ENCODE measurements at regions of chr5 and their contacts with region 1.

Region 1: GRCh38 chr5:71533614-71534013 is 53.5 kb upstream of the MCCC2 start:
- DNase-seq: peak; percentile 19
- H3K4me3 ChIP-seq: no peak overlapping the region
- H3K27ac ChIP-seq: no peak overlapping the region
- H3K4me1 ChIP-seq: no peaks in the 10 kb centered on the region
- H3K27me3 ChIP-seq: no peaks in the 10 kb centered on the region
- CTCF ChIP-seq: no peak

Region 2: DNA sequence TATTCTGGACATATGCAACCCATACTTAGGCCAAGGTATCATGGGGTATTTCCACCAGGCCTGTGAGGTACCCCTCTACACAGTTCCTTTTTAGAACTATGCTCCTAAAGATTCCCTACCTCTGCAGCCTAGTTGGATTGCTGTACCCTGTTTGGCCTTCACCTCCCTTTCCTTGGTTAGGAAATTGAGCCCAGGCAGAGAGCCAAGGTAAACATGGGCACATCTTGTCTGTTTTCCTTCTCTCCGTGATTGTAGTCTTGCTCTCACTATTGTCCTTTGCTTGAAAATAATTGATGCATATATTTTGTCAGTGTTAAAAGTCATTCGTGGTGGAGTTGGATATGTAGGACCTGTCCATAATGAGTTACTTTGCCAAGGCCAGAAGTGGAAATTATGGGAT is 51.5 kb before region 1 on chr5:
- CTCF ChIA-PET with region 1: no interaction called
- POLR2A ChIA-PET with region 1: no interaction called
- intact Hi-C with region 1: loop called (anchors 10 kb)
- DNase-seq: no peak
- H3K4me3 ChIP-seq: no peak overlapping the region
- H3K27ac ChIP-seq: no peak overlapping the region
- H3K4me1 ChIP-seq: no peaks in the 10 kb centered on the region
- H3K27me3 ChIP-seq: no peaks in the 10 kb centered on the region
- CTCF ChIP-seq: no peak

Region 3: DNA sequence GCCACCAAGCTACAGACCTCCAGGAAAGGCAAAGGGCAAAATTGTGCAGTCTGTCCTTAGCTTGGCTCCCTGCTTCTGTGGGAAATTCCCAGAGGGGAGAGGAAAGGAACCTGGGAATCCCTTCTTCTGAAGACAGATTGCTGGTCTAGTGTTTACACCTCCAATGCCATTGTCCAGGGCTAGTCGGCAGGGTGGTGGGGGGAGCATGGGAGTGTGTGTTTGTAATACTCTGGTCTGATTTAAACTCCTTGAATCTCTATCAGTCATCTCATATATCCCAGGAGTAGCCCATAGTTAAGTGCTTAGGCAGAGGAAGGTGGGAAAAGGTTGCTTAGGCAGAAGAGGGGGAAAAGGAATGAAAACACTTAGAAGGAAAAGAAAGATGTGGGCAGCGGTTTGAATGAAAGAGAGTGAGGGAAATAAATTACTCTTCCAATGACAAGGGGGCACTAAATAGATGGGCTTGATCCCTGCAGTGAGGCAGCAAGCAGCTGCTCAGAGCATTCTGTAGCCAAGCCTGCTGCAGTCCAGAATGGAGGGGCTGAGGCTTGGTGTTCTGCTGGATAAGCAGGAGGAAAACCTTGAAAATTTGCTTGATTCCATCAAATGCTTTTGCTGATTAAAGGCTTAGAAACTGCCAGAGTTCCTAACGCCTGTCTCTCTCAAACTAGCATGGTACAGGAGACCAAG is 486.9 kb after region 1 on chr5:
- CTCF ChIA-PET with region 1: no interaction called
- POLR2A ChIA-PET with region 1: no interaction called
- intact Hi-C with region 1: no loop called
- DNase-seq: no peak
- H3K4me3 ChIP-seq: no peak overlapping the region
- H3K27ac ChIP-seq: no peak overlapping the region
- H3K4me1 ChIP-seq: no peaks in the 10 kb centered on the region
- H3K27me3 ChIP-seq: peaks cover 2% of the 10 kb centered on the region
- CTCF ChIP-seq: no peak

Measured in A673 (cell line).